ENCODE measurements at regions of chr7 and their contacts with region 1.

Region 1: DNA sequence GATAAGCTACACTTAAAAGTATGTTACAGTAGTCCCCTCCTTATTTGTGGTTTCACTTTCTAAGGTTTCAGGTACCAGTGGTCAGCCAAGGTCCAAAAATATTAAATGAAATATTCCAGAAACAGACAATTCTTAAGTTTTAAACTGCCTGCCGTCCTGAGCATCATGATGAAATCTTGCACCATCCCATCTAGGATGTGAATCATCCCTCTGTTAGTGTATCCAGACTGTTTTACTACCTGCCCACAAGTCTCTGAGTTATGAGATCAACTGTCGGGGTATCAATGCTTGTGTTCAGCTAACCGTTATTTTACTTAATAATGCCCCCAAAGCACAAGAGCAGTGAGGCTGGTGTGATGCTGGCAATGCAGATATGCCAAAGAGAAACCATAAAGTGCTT is 11.4 kb downstream of the KDM7A start:
- DNase-seq: no peak
- H3K4me3 ChIP-seq: no peak overlapping the region
- H3K27ac ChIP-seq: no peak overlapping the region
- H3K4me1 ChIP-seq: peaks cover 4 to 94% (median 20%) of the 10 kb centered on the region in 4 donors
- H3K27me3 ChIP-seq: no peaks in the 10 kb centered on the region
- CTCF ChIP-seq: no peak
- EP300 ChIP-seq: no peak
- POLR2A ChIP-seq: no peak

Region 2: DNA sequence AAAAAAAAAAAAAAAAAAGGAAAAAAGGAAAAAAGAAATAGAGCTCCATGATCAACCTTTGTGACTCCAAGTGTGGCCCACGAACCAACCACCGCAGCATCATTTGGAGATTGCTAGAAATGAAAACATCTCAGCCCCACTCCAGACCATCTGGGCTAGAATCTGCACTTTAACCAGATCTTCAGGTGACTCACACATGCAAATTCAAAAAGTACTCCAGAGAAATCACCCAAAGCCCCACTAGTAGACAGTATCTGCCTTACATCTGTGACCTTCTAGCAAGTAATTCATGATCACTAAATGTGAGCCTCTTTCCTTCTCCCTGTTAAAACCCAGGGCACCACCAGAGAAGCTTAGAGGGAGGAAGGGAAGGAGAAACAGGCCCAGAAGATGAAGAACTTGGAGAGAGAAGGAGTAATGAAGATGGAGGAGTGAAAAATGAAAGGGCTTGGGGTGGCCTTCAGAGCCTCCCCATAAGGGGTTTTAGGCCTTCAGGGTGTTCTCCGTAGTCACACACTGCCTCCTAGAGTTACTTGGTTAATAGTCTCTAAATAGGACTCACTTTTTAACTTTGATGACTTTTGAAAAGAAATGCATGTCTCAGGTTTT is 138.9 kb after region 1 on chr7:
- in situ Hi-C with region 1: loop called in 2 of 4 experiments (anchors 25 kb)
- intact Hi-C with region 1: no loop called
- DNase-seq: no peak
- H3K4me3 ChIP-seq: no peak overlapping the region
- H3K27ac ChIP-seq: no peak overlapping the region
- H3K4me1 ChIP-seq: peaks cover 0 to 23% (median 8%) of the 10 kb centered on the region in 4 donors
- H3K27me3 ChIP-seq: no peaks in the 10 kb centered on the region
- CTCF ChIP-seq: peak in 4 of 5 experiments; percentile 19 to 36 (median 25)
- EP300 ChIP-seq: no peak
- POLR2A ChIP-seq: no peak